Activated CD4-positive, alpha-beta memory T cell treated with anti-CD3 and anti-CD28 coated beads for 36 hours (primary cell): ENCODE measurements at regions of chr18 and their contacts with region 1.

Region 1: GRCh38 chr18:9136315-9137155 is at the start of gene ANKRD12:
- DNase-seq: peak; percentile 99
- H3K4me3 Mint-ChIP-seq: peak within 1 kb of the TSS; percentile 95
- H3K27ac Mint-ChIP-seq: peak within 1 kb of the TSS; percentile 98
- H3K4me1 Mint-ChIP-seq: peaks cover 53% of the 10 kb centered on the region
- H3K27me3 Mint-ChIP-seq: no peaks in the 10 kb centered on the region
- total RNA-seq, gene ANKRD12: 77.8 to 83.9 TPM

Region 2: GRCh38 chr18:8608795-8609658 is 527.5 kb before region 1 on chr18 and contains the start of gene RAB12:
- CTCF ChIA-PET with region 1: no interaction called
- POLR2A ChIA-PET with region 1: no interaction called
- intact Hi-C with region 1: loop called (anchors 2 kb)
- DNase-seq: peak; percentile 90
- H3K4me3 Mint-ChIP-seq: peak within 1 kb of the TSS; percentile 88
- H3K27ac Mint-ChIP-seq: peak within 1 kb of the TSS; percentile 90
- H3K4me1 Mint-ChIP-seq: peaks cover 48% of the 10 kb centered on the region
- H3K27me3 Mint-ChIP-seq: peaks cover 2% of the 10 kb centered on the region
- total RNA-seq, gene RAB12: 9.4 to 10.1 TPM

Region 3: DNA sequence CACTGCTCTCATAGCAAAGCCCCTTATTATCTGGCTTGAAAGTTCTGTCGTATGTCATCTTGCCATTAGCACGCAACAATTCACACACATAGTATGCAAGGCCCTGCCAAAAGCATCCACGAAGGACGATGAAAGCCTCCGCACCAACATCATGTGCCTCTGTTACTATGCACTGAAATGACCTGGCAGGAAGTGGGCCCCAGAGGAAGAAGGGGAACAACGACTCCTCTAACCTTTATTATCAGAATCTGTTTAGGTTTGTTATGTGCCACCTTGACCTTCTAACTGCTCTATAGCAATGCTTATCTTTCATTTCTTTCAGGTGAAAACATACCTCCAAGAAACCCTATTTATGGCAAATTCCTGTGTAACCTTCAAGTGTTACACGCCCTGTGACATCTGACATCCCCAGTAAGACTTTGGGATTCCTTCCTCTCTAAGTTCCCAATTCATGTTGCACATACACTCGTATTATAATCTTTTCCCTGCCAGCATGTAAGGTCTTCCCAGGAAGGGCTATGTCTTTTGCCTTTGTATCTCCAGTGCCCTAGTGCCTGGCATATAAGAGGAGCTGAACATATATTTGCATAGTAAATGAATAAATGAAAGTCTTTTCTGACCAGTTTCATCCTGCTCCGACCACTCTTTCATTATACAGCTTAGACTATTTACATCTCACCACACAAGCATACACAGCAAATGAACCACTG is 41.1 kb before region 1 on chr18:
- CTCF ChIA-PET with region 1: interaction called, 4 read pairs
- POLR2A ChIA-PET with region 1: interaction called, 84 read pairs
- intact Hi-C with region 1: loop called (anchors 2 kb)
- DNase-seq: peak; percentile 87
- H3K4me3 Mint-ChIP-seq: peak overlapping the region; percentile 68
- H3K27ac Mint-ChIP-seq: peak overlapping the region; percentile 100
- H3K4me1 Mint-ChIP-seq: peaks cover 68% of the 10 kb centered on the region
- H3K27me3 Mint-ChIP-seq: no peaks in the 10 kb centered on the region

Region 4: GRCh38 chr18:9117980-9118841 is 18.3 kb before region 1 on chr18:
- CTCF ChIA-PET with region 1: interaction called, 3 read pairs
- POLR2A ChIA-PET with region 1: interaction called, 95 read pairs
- intact Hi-C with region 1: loop called (anchors 1 kb)
- DNase-seq: no peak
- H3K4me3 Mint-ChIP-seq: peak overlapping the region; percentile 72
- H3K27ac Mint-ChIP-seq: peak overlapping the region; percentile 97
- H3K4me1 Mint-ChIP-seq: peaks cover 81% of the 10 kb centered on the region
- H3K27me3 Mint-ChIP-seq: no peaks in the 10 kb centered on the region

Region 5: DNA sequence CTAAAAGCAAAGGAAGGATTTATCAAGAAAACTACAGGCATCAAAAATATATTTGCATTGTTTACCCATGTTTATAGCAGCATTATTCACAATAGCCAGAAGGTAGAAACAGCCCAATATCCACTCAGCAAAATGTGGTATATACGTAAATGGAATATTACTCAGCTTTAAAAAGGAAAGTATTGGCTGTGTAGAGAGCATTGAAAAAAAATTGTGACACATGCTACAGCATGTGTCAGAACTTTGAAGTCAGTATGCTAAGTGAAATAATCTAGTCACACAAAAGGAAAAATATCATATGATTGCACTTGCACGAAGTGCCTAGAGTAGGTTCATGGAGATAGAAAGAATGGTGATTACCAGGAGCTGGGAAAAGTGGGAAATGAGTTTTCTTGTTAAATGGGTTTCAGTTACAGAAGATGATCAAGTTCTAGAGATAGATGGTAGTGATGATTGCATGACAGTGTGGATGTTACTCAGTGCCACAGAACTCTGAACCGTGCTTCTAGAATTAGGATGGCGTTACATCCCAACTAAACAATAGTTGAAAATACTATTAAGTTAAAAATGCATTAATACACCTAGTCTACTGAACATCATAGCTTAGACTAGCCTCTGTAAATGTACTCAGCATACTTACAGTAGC is 20.2 kb after region 1 on chr18:
- CTCF ChIA-PET with region 1: no interaction called
- POLR2A ChIA-PET with region 1: interaction called, 7 read pairs
- intact Hi-C with region 1: loop called (anchors 2 kb)
- DNase-seq: no peak
- H3K4me3 Mint-ChIP-seq: no peak overlapping the region
- H3K27ac Mint-ChIP-seq: peak overlapping the region; percentile 72
- H3K4me1 Mint-ChIP-seq: peaks cover 72% of the 10 kb centered on the region
- H3K27me3 Mint-ChIP-seq: no peaks in the 10 kb centered on the region

Region 6: GRCh38 chr18:9290156-9290555 is 153.6 kb after region 1 on chr18:
- CTCF ChIA-PET with region 1: no interaction called
- POLR2A ChIA-PET with region 1: no interaction called
- intact Hi-C with region 1: no loop called
- DNase-seq: no peak
- H3K4me3 Mint-ChIP-seq: no peak overlapping the region
- H3K27ac Mint-ChIP-seq: no peak overlapping the region
- H3K4me1 Mint-ChIP-seq: no peaks in the 10 kb centered on the region
- H3K27me3 Mint-ChIP-seq: no peaks in the 10 kb centered on the region

Region 7: DNA sequence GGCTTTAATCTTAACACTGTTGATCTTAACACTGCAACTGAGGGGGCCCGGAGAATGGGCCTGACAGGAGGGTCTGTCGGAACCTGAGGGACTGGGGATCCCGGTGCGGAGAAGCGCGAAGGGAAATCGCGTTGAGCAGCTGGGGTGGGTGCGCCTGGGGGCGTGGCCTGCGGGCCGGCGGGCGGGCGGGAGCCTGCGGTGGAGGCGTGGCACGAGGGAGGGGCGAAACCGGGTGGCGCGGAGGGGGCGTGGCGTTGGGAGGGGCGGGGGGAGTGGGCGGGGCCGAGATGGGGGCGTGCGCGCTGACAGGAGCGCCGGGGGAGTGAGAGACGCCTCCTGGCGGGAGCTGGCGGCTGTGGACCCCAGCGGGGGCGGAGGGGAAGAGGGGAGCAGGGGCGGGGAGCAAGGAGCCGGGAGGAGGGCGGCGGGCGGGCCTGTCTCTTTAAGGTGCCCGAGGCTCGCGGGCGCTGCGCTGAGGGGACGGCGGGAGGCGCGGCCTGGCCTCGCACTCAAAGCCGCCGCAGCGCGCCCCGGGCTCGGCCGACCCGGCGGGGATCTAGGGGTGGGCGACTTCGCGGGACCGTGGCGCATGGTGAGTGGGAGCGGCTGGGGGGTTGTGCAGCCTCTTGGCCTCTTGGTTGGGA is 197.9 kb after region 1 on chr18 and contains the start of gene TWSG1:
- CTCF ChIA-PET with region 1: interaction called, 3 read pairs
- POLR2A ChIA-PET with region 1: interaction called, 3 read pairs
- intact Hi-C with region 1: loop called (anchors 1 kb)
- DNase-seq: peak; percentile 93
- H3K4me3 Mint-ChIP-seq: peak within 1 kb of the TSS; percentile 83
- H3K27ac Mint-ChIP-seq: peak within 1 kb of the TSS; percentile 47
- H3K4me1 Mint-ChIP-seq: peaks cover 20% of the 10 kb centered on the region
- H3K27me3 Mint-ChIP-seq: peaks cover 6% of the 10 kb centered on the region
- total RNA-seq, gene TWSG1: 11.0 to 12.2 TPM